ENCODE measurements at regions of chr3 and their contacts with region 1.

Region 1: DNA sequence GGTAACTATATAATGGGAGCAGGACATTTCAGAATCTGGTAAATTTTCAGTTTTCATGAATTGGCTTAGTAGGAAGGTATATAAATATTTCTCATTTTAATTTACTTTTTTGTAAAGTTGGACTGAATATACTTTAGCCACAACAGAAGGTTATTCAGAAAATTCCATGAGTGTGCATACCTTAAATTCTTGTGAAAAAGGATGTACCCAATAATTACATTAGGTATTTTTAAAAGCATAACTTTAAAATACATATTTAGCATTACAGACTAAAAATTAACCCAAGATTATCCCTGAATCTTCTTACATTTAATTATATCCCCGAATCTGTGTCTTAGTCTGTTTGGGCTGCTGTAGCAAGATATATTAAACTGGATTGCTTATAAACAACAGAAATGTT is 24.9 kb upstream of the ATP11B start:
- DNase-seq: no peak
- ATAC-seq: no peak
- H3K4me3 ChIP-seq: no peak overlapping the region
- H3K27ac ChIP-seq: no peak overlapping the region
- H3K4me1 ChIP-seq: no peaks in the 10 kb centered on the region
- H3K27me3 ChIP-seq: peaks cover 4% of the 10 kb centered on the region; the same call in 1 of the 2 replicates
- CTCF ChIP-seq: no peak

Region 2: DNA sequence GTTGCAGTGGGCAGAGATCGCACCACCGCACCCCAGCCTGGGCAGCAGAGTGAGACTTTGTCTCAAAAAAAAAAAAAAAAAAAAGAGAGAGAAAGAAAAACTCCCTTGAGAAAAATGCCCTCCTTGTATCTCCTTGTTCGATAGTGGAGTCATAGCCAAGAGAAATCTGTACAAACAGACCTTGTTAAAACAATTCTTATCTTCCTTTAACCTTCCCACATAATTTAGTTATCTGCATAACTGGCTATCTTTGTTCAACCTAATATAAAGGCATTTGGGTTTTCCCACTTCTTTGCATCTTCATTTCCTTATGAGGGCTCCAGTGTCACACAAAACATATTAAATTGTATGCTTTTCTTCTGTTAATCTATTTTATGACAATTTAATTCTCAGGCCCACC is 40.2 kb before region 1 on chr3:
- CTCF ChIA-PET with region 1: no interaction called
- POLR2A ChIA-PET with region 1: no interaction called
- in situ Hi-C with region 1: no loop called
- intact Hi-C with region 1: loop called (anchors 1 kb)
- DNase-seq: no peak
- ATAC-seq: no peak
- H3K4me3 ChIP-seq: no peak overlapping the region
- H3K27ac ChIP-seq: no peak overlapping the region
- H3K4me1 ChIP-seq: peaks cover 11% of the 10 kb centered on the region
- H3K27me3 ChIP-seq: no peaks in the 10 kb centered on the region
- CTCF ChIP-seq: no peak

Region 3: GRCh38 chr3:182792901-182793662 is 24.7 kb after region 1 on chr3 and contains the start of gene ATP11B:
- CTCF ChIA-PET with region 1: no interaction called
- POLR2A ChIA-PET with region 1: no interaction called
- in situ Hi-C with region 1: no loop called
- intact Hi-C with region 1: no loop called
- DNase-seq: peak; percentile 38
- ATAC-seq: peak; percentile 92
- H3K4me3 ChIP-seq: peak within 1 kb of the TSS; percentile 87 to 90
- H3K27ac ChIP-seq: peak within 1 kb of the TSS; percentile 97
- H3K4me1 ChIP-seq: peaks cover 9% of the 10 kb centered on the region
- H3K27me3 ChIP-seq: peaks cover 3% of the 10 kb centered on the region; the same call in 1 of the 2 replicates
- CTCF ChIP-seq: no peak
- total RNA-seq, gene ATP11B: 108 TPM

Region 4: GRCh38 chr3:182843478-182843877 is 75.1 kb after region 1 on chr3:
- CTCF ChIA-PET with region 1: no interaction called
- POLR2A ChIA-PET with region 1: no interaction called
- in situ Hi-C with region 1: no loop called
- intact Hi-C with region 1: no loop called
- DNase-seq: no peak
- ATAC-seq: no peak
- H3K4me3 ChIP-seq: no peak overlapping the region
- H3K27ac ChIP-seq: no peak overlapping the region
- H3K4me1 ChIP-seq: no peaks in the 10 kb centered on the region
- H3K27me3 ChIP-seq: no peaks in the 10 kb centered on the region
- CTCF ChIP-seq: no peak

Region 5: GRCh38 chr3:182855076-182855475 is 86.7 kb after region 1 on chr3:
- CTCF ChIA-PET with region 1: no interaction called
- POLR2A ChIA-PET with region 1: no interaction called
- in situ Hi-C with region 1: no loop called
- intact Hi-C with region 1: no loop called
- DNase-seq: no peak
- ATAC-seq: no peak
- H3K4me3 ChIP-seq: no peak overlapping the region
- H3K27ac ChIP-seq: no peak overlapping the region
- H3K4me1 ChIP-seq: no peaks in the 10 kb centered on the region
- H3K27me3 ChIP-seq: no peaks in the 10 kb centered on the region
- CTCF ChIP-seq: no peak

Region 6: DNA sequence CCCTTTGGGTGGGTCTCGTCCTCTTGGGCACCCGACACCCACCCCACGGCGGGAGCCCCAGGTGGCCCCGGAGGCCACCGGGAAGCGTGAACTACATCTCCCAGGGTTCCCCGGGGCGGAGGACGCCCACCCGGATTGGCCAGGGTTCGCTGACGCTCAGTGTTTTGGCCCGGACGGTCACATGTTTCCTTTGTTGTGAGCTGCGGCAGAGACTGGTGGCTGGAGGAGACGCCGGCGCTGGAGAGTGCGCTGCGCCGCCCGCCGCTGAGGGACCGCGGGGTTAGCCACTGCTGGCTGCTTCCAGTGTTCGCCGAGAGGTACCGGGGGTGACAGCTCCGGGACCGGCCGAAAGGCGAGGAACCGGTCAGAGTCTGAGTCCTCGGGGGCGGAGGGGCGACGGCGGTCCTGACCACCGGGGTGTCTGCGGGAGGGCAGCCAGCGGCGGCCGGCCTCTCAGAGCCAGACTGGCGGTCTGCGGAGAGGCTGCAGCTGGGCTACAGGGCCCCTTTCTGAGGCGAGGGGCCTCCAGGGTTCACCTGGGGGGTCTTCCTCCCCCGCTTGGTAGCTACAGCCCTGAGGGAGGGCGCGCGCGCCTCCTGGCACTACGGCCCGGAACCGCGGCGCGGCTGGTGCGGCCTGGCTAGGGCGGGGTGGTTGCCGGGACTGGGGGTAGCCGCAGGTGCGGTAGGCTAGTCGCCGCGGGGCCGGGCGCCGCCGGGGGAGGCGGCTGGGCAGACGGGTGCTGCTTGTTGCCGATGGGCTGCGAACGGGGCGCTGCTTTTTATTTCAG is 867.2 kb after region 1 on chr3 and contains the start of gene KLHL24:
- CTCF ChIA-PET with region 1: no interaction called
- POLR2A ChIA-PET with region 1: no interaction called
- in situ Hi-C with region 1: no loop called
- intact Hi-C with region 1: no loop called
- DNase-seq: peak; percentile 75
- ATAC-seq: peak; percentile 92
- H3K4me3 ChIP-seq: peak within 1 kb of the TSS; percentile 74 to 87
- H3K27ac ChIP-seq: peak within 1 kb of the TSS; percentile 82
- H3K4me1 ChIP-seq: peaks cover 16% of the 10 kb centered on the region
- H3K27me3 ChIP-seq: no peaks in the 10 kb centered on the region
- CTCF ChIP-seq: no peak
- total RNA-seq, gene KLHL24: 42.0 TPM

Measured in Panc1 (cell line).